B cell (primary cell): ENCODE measurements at regions of chr12 and their contacts with region 1.

Region 1: GRCh38 chr12:39272871-39273770 is 169.8 kb downstream of the KIF21A start:
- DNase-seq: peak; percentile 26
- ATAC-seq: no peak
- H3K4me3 ChIP-seq: no peak overlapping the region
- H3K4me3 Mint-ChIP-seq: no peak overlapping the region
- H3K27ac ChIP-seq: no peak overlapping the region
- H3K27ac Mint-ChIP-seq: no peak overlapping the region
- H3K4me1 ChIP-seq: no peaks in the 10 kb centered on the region
- H3K4me1 Mint-ChIP-seq: no peaks in the 10 kb centered on the region
- H3K27me3 ChIP-seq: no peaks in the 10 kb centered on the region
- H3K27me3 Mint-ChIP-seq: peaks cover 8% of the 10 kb centered on the region
- CTCF ChIP-seq: peak; percentile 84

Region 2: DNA sequence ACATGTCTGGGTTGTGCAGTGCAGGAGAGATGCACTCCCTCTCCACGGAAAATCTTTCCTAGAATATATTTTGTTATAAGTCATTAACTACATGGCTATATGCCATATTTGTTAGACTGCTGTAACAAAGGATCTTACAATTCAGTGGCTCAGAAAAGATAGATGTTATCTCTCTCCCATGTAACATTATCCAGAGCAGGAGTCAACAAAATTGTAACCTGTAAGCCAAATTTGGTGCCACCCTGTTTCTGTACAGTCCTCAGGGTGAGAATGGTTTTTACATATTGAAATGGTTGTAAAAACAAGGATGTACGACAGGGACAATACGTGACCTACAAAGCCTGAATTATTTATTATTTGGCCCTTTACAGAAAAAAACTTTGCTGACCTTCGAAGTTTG is 14.3 kb after region 1 on chr12:
- CTCF ChIA-PET with region 1: interaction called, 15 read pairs
- POLR2A ChIA-PET with region 1: no interaction called
- intact Hi-C with region 1: no loop called
- DNase-seq: no peak
- ATAC-seq: no peak
- H3K4me3 ChIP-seq: no peak overlapping the region
- H3K4me3 Mint-ChIP-seq: no peak overlapping the region
- H3K27ac ChIP-seq: no peak overlapping the region
- H3K27ac Mint-ChIP-seq: no peak overlapping the region
- H3K4me1 ChIP-seq: no peaks in the 10 kb centered on the region
- H3K4me1 Mint-ChIP-seq: no peaks in the 10 kb centered on the region
- H3K27me3 ChIP-seq: no peaks in the 10 kb centered on the region
- H3K27me3 Mint-ChIP-seq: no peaks in the 10 kb centered on the region
- CTCF ChIP-seq: no peak